ENCODE measurements at regions of chr4 and their contacts with region 1.

Region 1: GRCh38 chr4:118772081-118772766 is 63.7 kb downstream of the SEC24D start:
- DNase-seq: no peak
- H3K4me3 ChIP-seq: no peak overlapping the region
- CTCF ChIP-seq: peak; percentile 22

Region 2: DNA sequence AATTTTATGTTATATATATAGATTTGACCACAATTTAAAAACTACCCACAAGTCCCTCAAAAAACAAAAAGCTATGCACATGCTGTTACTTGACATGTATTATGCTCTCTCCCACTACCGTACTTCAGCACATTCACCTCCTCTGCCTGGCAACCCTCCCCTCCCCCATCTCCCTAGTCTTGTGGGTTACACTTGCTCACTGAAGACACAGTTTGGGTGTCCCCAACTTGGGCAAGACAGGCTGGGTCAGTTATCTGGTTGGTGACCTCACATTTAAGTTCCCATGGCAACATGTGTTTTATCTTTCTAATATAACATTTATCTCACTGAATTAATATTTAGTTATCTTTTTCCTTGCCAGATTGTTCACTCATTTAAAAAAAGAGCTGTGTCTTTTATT is 31.0 kb after region 1 on chr4:
- CTCF ChIA-PET with region 1: interaction called, 19 read pairs
- POLR2A ChIA-PET with region 1: no interaction called
- DNase-seq: no peak
- H3K4me3 ChIP-seq: no peak overlapping the region
- CTCF ChIP-seq: no peak

Region 3: DNA sequence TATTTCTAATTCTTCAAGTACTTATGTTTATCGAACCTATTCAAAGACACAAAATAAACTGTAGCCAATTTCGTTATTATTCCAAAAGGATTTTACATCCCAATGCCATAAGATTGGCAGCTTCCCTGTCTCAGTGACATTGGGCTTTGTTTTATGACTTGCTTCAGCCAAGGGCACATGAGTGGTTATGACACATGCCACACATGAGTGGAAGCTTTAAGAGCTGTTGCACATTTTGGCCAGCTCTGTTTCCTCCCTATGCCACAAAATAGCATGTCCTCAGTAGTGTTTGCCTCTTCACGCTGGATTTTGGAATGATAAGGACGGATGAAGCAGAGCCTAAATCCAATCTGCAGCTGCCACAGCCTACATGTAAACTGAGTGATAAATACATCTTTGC is 41.8 kb after region 1 on chr4:
- CTCF ChIA-PET with region 1: interaction called, 10 read pairs
- POLR2A ChIA-PET with region 1: no interaction called
- DNase-seq: no peak
- H3K4me3 ChIP-seq: no peak overlapping the region
- CTCF ChIP-seq: no peak

Measured in AG04449 (cell line).